ENCODE measurements at regions of chr2 and their contacts with region 1.

Region 1: GRCh38 chr2:72579591-72580180 is 246.1 kb downstream of the EXOC6B start:
- DNase-seq: no peak

Region 2: GRCh38 chr2:71923887-71924533 is 655.7 kb before region 1 on chr2:
- intact Hi-C with region 1: loop called (anchors 5 kb)
- DNase-seq: peak in 7 of 10 donors; percentile 52 to 92 (median 69)